ENCODE measurements at regions of chr11 and their contacts with region 1.

Region 1: DNA sequence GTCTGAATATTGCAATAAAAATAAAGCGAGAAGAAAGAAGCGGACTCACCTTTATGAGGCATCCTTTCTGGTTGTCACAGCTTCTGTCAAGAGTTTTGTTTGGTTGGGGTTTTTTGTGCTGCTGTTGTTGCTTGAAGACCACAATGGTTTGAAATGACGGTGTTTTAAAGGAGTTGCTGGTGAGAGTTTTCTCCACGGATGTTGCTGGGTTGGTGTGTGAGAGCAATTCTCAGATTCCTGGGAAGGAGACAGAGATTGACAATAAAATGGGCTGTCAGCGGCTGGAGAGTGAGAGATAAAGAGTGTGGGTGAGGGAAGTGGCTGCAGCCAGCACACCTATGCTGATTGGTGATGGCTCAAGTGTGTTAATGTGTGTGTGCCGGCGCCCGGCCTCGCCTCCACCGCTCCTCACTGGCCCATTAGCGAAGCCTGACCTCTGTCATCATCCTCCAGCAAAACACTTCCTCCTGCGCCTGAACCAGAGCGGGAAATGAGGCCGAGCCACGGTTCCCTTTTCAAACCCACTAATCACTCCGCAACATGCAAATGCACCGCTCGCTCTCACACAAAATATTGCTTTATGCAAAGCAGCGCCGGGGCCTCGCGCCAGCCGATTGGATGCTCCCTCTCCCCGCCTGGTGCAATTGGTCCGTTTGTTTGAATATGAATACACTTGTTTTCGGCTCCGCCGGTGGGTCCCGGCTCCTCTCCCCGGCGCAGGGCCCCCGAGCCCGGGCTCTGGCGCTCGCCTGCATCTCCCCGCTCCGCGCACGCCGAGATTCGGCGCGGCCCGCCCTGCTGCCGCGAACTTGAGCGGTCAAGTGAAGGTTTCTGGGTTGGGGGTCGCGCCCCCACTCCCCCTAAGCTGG is at the start of gene PAX6:
- DNase-seq: peak; percentile 66
- H3K4me3 ChIP-seq: peak within 1 kb of the TSS in 1 of 3 experiments; percentile 11
- H3K27ac ChIP-seq: no peak within 1 kb of the TSS
- H3K4me1 ChIP-seq: peaks cover 4% of the 10 kb centered on the region
- H3K27me3 ChIP-seq: peaks cover 89 to 99% of the 10 kb centered on the region in 2 experiments
- CTCF ChIP-seq: no peak
- POLR2A ChIP-seq: no peak
- total RNA-seq, gene PAX6: not detected in 2 replicates

Region 2: GRCh38 chr11:31740131-31740530 is 70.9 kb before region 1 on chr11:
- CTCF ChIA-PET with region 1: no interaction called
- POLR2A ChIA-PET with region 1: no interaction called
- dilution Hi-C with region 1: no loop called
- intact Hi-C with region 1: no loop called
- DNase-seq: no peak
- H3K4me3 ChIP-seq: no peak overlapping the region
- H3K27ac ChIP-seq: no peak overlapping the region
- H3K4me1 ChIP-seq: no peaks in the 10 kb centered on the region
- H3K27me3 ChIP-seq: no peaks in the 10 kb centered on the region
- CTCF ChIP-seq: no peak
- POLR2A ChIP-seq: no peak

Region 3: GRCh38 chr11:31779374-31779791 is 31.6 kb before region 1 on chr11:
- CTCF ChIA-PET with region 1: no interaction called
- POLR2A ChIA-PET with region 1: no interaction called
- dilution Hi-C with region 1: no loop called
- intact Hi-C with region 1: no loop called
- DNase-seq: peak; percentile 51
- H3K4me3 ChIP-seq: no peak overlapping the region
- H3K27ac ChIP-seq: no peak overlapping the region
- H3K4me1 ChIP-seq: no peaks in the 10 kb centered on the region
- H3K27me3 ChIP-seq: no peaks in the 10 kb centered on the region
- CTCF ChIP-seq: no peak
- POLR2A ChIP-seq: no peak

Region 4: DNA sequence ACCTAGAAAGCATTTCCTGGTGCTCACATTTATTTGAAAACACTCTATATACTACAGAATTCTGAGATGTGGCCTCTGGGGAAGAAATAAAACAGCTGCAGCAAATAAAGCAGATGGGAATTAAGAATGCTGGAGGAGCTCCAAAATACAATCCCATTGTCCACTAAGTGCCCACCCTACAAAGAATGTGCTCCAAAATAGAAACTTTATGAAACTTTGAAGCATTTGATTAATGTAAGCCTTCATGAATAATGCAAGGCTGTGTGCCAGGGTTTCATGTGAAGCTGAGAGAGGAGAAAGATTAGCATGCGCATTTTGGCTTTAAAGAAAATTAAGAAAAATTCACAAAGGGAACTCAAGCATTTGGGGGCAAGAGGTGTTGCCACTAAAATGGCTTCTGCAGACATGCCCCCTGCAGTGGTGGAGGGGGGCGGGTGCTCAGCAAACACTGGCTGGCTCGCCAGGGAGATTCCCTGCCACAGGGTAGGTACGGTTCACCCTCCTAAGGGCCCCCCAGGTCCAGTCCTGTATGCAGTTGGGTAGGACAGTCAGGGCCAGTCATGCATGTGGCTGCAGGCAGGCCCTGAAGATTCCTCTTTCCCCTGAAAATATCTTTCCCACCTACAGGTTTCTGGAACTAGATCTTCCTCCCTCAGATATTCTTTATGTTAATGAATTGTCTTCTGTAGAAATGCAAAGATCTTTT is 233.3 kb after region 1 on chr11:
- CTCF ChIA-PET with region 1: no interaction called
- POLR2A ChIA-PET with region 1: no interaction called
- dilution Hi-C with region 1: no loop called
- intact Hi-C with region 1: no loop called
- DNase-seq: no peak
- H3K4me3 ChIP-seq: no peak overlapping the region
- H3K27ac ChIP-seq: no peak overlapping the region
- H3K4me1 ChIP-seq: no peaks in the 10 kb centered on the region
- H3K27me3 ChIP-seq: peaks cover 4 to 9% of the 10 kb centered on the region in 2 experiments
- CTCF ChIP-seq: no peak
- POLR2A ChIP-seq: no peak

Region 5: DNA sequence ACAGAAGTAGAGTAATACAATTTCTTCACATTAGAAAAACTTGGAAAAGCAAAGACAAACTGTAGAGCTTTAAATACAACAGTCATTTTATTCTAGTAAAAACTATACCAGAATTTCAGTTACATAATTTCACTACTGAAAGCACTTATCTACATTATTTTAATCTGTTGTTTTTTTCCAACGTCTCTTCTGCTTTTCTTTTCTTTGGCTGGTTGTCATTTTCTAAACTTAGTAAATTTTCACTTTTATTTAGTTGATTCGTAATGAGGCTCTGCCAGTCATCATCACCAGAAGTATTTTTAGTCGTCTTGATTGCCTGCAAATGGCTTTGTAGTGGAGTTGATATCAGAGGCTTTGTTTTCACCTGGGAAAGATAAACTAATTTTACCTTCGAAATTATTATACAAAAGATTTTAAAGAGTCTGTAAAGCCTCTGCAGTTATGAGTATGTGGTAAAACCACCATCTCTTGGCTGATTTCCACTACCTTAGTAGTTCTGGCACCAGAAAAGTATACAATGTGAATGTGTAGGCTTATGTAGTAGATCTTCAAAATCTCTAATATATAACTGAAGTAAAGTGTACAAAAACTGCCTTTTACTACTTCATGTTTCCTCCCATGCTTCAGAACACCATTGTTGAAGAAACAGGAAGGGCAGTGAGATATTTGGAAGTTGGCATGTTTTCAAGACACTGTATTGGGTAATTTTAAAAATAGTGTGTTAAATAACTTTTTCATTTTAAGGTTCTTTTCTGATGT is 791.8 kb after region 1 on chr11:
- CTCF ChIA-PET with region 1: no interaction called
- POLR2A ChIA-PET with region 1: no interaction called
- dilution Hi-C with region 1: no loop called
- intact Hi-C with region 1: loop called (anchors 10 kb)
- DNase-seq: peak; percentile 66
- H3K4me3 ChIP-seq: no peak overlapping the region
- H3K27ac ChIP-seq: peak overlapping the region; percentile 36
- H3K4me1 ChIP-seq: peaks cover 6% of the 10 kb centered on the region
- H3K27me3 ChIP-seq: no peaks in the 10 kb centered on the region
- CTCF ChIP-seq: no peak
- POLR2A ChIP-seq: no peak

Measured in endothelial cell of umbilical vein (primary cell).